Cardiac septum (tissue), 1 donor: ENCODE measurements at regions of chr7 and their contacts with region 1.

Region 1: GRCh38 chr7:149067876-149068275 is 22.6 kb downstream of the ZNF786 start:
- DNase-seq: no peak

Region 2: DNA sequence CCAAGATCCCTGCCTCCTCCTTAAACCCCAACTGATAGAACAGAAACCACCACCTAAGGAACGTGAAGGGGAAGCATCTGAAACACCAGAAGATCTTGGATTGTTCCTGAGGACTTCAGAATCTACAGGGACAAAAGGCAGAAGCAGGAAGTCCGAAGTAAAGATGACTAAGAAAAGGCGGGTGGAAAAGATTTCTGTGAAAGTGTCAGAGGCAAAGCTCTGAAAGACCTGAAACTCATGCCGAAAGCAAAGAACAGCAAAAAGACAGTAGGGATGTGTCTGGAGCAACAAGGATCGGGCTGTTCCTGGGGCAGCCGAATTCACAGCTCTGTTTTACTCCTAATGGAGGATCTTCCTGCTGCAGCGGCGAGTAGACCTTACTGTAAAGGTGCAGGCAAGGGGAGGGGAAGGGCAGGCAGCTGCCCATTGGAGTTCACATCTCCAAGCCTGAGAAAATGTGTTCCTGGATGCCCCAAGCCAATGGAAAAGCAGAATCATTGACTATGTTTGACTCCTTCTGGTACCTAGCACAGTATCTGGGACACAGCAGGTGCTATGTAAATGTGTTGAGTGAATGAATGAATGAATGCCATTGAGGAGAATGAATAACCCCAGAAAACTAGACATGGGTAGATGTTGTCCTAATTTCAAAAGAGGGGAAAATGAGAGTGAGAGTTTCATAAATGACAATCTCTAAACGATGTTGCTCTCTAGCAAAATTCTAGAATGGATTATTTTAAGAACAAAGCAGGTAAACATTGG is 79.9 kb before region 1 on chr7:
- intact Hi-C with region 1: no loop called
- DNase-seq: no peak

Region 3: DNA sequence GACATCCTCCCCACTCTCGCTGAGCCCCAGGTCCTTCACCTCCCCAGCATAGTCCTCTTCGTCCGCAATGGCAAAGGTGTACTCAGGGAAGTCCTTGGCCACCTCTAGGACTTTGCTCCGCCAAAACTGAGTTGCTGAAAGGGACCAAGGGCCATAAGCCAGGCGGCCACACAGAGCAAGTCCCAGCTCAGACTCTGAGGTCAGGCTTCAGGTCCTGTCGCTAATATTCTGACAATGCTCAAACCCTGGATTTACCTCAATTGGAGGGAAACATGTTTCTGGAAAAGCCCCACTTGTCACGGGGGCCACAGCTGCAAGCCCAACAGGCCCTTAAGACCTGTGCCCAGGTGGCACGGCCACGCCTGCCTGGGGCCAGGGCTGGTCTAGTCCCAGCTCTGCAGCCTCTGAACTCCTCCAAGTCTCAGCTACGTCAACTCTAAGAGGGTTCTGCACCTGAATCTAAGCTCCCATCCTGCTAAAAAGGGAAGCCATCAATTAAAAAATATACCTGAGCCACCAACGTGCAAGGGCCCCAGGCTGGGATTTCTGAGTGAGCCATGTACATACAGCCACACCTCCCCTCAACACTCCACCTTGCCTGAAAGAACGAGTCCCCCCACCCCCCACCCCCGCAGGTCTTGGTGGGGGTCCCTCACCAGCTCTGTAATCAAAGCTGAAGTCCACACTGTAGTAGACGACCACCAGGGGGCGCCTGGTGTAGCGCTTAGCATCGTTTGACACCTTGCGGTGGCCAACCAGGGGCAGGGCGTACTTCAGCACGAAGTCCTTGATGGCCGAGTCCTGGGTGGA is 62.4 kb before region 1 on chr7:
- intact Hi-C with region 1: loop called (anchors 1 kb)
- DNase-seq: peak; percentile 86

Region 4: GRCh38 chr7:149028346-149029109 is 39.3 kb before region 1 on chr7 and contains the start of gene PDIA4:
- intact Hi-C with region 1: loop called (anchors 2 kb)
- DNase-seq: peak; percentile 100
- total RNA-seq, gene PDIA4: 38.5 TPM

Region 5: DNA sequence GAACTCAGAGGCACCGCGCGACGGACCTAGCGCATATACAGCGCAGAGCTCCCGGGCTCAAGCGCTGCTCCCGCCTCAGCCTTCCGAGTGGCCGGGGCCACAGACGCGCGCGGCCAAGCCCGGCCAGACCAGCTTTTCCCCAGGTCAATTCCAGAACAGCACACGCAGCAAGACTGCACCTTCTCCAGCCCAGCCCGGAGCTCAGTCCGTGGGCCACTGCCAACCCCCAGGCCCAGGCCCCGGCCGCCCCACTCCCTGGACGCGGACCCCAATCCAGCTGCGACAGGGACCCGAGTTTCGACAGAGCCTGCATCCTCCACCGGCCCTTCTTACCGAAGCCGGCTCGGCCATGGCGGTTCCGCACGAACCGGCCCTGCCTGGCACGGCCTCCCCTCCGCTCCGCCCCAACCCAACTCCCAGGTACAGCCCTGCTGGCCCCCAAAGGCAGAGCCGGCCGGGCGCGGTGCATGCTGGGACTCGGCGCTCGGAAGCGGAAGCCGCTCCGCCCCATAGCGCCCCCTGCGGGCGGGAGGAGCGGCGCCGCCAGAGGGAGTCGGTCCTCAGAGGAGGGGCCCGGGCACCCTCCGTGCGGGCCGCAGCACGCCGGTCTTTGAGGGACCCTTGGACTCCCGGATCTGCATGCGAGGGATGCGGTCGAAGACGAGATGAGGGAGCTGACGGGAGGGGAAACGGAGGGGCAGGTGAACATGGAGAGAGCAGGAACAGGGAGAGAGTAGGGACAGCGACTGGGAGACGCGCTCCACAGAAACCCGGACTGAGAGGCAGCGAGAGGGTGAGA is 58.2 kb after region 1 on chr7 and contains the start of gene ZNF425:
- intact Hi-C with region 1: loop called (anchors 2 kb)
- DNase-seq: peak; percentile 95
- total RNA-seq, gene ZNF425: 0.78 TPM

Region 6: GRCh38 chr7:149586646-149587332 is 518.9 kb after region 1 on chr7:
- intact Hi-C with region 1: no loop called
- DNase-seq: peak; percentile 36